ENCODE measurements at regions of chr2 and their contacts with region 1.

Region 1: DNA sequence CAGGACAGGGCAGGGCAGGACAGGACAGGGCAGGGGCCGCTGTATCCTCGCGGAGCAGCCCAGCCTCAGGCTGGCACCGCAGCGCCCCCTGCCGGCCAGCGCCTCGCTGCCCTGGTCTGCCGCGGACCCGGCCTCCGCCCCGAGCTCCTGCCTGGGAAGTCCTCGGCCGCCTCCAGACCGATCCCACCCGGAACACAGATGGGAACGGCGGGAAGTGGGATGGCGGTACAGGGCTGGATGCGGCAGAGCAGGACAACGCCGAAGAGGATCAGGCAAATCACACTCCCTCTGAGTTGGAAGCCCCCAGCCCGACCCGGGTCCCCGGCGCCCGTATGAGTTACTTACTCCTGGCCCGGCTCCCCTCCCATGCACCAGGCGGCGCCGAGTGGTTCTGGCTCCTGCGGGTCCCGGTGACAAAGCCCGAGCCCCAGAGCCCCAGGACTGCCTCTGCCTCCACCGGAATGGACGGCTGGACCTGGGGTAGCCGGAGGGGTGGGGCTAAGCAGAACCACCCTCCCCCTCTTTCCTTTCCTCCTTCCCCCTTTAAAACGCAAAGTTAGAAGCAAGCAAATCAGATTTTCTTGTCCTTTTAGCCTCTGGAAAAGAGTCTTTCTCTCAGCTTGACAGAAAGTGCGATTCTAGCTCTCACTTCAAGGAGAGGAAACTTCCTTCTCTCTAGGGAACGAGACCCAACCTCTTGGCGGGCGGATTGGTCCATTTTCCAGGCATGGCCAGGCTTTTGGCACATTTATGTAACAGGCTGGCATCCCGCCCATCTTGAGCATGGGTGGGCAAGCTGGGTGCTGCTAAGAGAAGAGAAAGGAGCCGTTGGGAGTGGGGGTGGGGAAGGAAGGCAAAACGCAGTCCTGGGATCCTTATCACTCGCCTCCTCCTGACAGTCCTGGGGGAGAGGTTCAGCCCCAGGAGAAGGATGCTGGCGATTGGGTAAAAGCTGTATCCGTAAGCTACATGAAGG is at the start of gene TP53I3:
- DNase-seq: peak; percentile 85
- H3K4me3 Mint-ChIP-seq: peak within 1 kb of the TSS; percentile 75
- H3K27ac Mint-ChIP-seq: peak within 1 kb of the TSS; percentile 92
- H3K4me1 Mint-ChIP-seq: peaks cover 28% of the 10 kb centered on the region
- H3K27me3 Mint-ChIP-seq: no peaks in the 10 kb centered on the region
- CTCF ChIP-seq: peak; percentile 94
- total RNA-seq, gene TP53I3: 81.8 and 99.8 TPM in 2 replicates

Region 2: GRCh38 chr2:23824777-23825212 is 259.9 kb before region 1 on chr2:
- CTCF ChIA-PET with region 1: interaction called, 30 read pairs
- POLR2A ChIA-PET with region 1: interaction called, 7 read pairs
- intact Hi-C with region 1: loop called (anchors 1 kb)
- DNase-seq: peak; percentile 67
- H3K4me3 Mint-ChIP-seq: no peak overlapping the region
- H3K27ac Mint-ChIP-seq: no peak overlapping the region
- H3K4me1 Mint-ChIP-seq: peaks cover 27% of the 10 kb centered on the region
- H3K27me3 Mint-ChIP-seq: no peaks in the 10 kb centered on the region
- CTCF ChIP-seq: peak; percentile 61

Region 3: DNA sequence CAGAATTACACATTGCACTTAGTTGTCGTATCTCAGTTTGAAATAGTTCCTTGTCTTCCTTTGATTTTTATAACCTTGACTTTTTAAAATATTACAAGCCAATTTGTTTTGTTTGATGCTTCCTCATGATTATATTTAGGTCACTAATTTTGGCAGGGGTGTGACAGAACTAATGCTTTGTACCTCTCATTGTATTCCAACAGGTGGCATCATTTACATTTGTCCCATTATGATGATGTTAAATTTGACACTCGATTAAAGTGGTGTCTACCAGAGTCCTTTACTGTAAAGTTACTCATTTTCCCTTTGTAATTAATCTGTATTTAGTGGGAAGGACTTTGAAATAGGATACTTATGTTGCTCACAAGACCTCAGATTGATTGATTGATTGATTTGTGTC is 96.3 kb before region 1 on chr2:
- CTCF ChIA-PET with region 1: interaction called, 7 read pairs
- POLR2A ChIA-PET with region 1: interaction called, 7 read pairs
- intact Hi-C with region 1: loop called (anchors 1 kb)
- DNase-seq: peak; percentile 54
- H3K4me3 Mint-ChIP-seq: no peak overlapping the region
- H3K27ac Mint-ChIP-seq: no peak overlapping the region
- H3K4me1 Mint-ChIP-seq: peaks cover 13% of the 10 kb centered on the region
- H3K27me3 Mint-ChIP-seq: no peaks in the 10 kb centered on the region
- CTCF ChIP-seq: peak; percentile 62

Region 4: DNA sequence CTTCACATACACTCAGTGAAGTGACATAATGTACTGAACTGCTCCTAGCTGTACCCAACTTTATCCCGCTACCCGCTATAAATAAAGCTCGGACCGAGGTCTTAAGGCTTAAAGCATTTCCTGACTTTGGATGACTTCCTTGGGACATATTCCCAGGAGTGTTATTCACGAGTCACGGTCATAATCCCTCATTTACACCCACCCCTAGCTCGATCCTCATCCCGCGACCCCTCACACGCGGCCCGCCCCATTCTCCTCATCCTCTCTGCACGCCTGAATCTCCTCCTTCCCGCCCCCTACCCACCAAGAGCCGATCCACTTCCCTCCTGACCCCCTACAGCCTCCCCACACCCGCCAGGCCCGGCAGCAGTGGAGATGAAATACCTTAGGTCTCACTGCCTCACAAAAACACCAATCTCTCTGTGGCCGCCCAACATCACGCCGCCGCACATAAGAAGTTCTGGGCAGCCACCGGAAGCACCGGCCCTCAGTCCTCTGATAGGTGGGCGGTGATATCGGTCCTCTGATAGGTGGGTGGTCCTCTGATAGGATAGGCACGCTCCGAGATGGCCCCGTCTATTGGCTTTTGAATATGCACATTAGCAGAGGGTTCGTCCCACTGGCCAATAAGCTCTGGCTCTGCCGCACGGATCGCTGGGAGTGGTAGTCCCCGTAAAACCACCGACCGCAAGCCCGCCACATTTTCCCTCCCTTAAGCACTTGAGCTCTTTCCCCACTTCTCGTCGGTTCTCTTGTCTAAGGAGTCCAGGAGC is 37.6 kb before region 1 on chr2 and contains the start of gene WDCP:
- CTCF ChIA-PET with region 1: interaction called, 6 read pairs
- POLR2A ChIA-PET with region 1: interaction called, 15 read pairs
- intact Hi-C with region 1: no loop called
- DNase-seq: peak; percentile 99
- H3K4me3 Mint-ChIP-seq: peak within 1 kb of the TSS; percentile 97
- H3K27ac Mint-ChIP-seq: peak within 1 kb of the TSS; percentile 83
- H3K4me1 Mint-ChIP-seq: peaks cover 24% of the 10 kb centered on the region
- H3K27me3 Mint-ChIP-seq: no peaks in the 10 kb centered on the region
- CTCF ChIP-seq: no peak
- total RNA-seq, gene WDCP: 9.0 and 11.2 TPM in 2 replicates

Region 5: DNA sequence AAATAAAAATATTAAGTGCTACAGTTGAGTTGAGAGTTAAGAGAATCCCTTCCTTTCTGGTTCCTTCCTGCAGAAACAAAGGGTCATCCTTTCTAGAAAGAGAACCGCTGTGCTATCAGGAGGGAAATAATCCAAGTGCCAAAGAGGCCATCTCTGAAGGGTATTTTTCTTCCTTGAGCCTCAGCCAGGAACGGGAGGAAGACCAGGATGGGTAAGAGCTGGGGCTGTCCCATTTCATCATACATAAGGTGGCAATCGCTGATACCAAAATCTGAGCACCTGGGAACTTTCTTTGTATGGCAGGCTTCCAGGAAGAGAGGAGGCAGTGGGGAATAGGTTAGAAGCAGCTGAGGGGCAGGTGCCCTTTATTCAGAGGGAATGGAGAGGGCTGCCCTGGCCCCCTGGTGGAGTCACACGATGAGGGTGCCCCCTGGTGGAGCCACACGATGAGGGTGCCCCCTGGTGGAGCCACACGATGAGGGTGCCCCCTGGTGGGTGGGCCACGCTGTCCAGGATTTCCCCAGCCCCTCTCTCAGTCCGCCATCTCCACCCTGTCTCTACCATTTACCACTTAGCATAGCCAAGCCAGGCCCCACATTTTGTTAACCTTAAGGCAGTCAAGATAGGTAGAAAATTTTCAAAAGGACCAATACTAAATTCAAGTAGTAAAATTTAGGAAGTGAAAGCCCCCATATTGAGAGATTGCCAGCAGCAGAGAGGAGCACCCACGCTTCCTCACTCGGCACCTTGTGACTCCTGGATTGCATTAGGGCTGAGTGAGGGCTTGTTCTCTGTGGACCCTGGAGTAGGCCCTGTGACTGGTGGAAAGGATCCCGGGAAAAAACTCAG is 79.7 kb after region 1 on chr2:
- CTCF ChIA-PET with region 1: no interaction called
- POLR2A ChIA-PET with region 1: interaction called, 4 read pairs
- intact Hi-C with region 1: loop called (anchors 1 kb)
- DNase-seq: peak; percentile 38
- H3K4me3 Mint-ChIP-seq: no peak overlapping the region
- H3K27ac Mint-ChIP-seq: no peak overlapping the region
- H3K4me1 Mint-ChIP-seq: no peaks in the 10 kb centered on the region
- H3K27me3 Mint-ChIP-seq: no peaks in the 10 kb centered on the region
- CTCF ChIP-seq: peak; percentile 60

Region 6: DNA sequence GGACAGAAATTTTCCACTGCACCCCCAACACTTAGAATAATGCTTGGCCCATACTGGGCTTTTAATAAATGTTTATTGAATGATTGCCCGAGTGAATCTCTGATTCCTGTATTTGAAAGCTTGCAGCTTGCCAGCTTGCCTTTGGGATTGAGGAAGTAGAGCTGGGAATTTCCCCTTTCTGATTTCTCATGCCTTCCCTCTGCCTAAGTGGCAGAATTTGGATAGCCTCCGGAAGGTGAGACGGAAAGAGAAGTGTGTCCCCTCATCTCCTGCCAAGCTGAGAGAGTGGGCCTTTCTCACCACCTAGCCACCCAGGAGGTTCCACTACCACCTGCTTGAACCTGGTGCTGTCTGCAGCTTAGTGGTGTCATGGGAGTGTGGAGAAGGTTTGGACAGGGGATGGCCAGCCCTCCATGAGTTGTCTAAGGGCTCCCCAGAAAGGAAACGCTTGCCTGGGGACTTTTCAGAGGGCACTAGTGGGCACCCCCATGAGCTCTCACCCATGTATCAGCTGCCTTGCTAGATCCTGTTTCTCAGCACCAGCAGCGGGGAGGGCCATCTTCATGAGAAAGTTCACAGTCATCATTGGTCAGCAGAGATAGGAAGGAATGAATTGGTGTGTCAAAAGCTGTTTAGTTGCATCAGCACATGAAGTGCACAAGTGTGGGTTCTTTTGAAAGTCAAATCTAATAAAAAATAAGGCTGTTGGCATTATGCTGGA is 397.7 kb after region 1 on chr2:
- CTCF ChIA-PET with region 1: no interaction called
- POLR2A ChIA-PET with region 1: no interaction called
- intact Hi-C with region 1: no loop called
- DNase-seq: no peak
- H3K4me3 Mint-ChIP-seq: no peak overlapping the region
- H3K27ac Mint-ChIP-seq: no peak overlapping the region
- H3K4me1 Mint-ChIP-seq: no peaks in the 10 kb centered on the region
- H3K27me3 Mint-ChIP-seq: no peaks in the 10 kb centered on the region
- CTCF ChIP-seq: no peak